ENCODE measurements at regions of chr19 and their contacts with region 1.

Region 1: DNA sequence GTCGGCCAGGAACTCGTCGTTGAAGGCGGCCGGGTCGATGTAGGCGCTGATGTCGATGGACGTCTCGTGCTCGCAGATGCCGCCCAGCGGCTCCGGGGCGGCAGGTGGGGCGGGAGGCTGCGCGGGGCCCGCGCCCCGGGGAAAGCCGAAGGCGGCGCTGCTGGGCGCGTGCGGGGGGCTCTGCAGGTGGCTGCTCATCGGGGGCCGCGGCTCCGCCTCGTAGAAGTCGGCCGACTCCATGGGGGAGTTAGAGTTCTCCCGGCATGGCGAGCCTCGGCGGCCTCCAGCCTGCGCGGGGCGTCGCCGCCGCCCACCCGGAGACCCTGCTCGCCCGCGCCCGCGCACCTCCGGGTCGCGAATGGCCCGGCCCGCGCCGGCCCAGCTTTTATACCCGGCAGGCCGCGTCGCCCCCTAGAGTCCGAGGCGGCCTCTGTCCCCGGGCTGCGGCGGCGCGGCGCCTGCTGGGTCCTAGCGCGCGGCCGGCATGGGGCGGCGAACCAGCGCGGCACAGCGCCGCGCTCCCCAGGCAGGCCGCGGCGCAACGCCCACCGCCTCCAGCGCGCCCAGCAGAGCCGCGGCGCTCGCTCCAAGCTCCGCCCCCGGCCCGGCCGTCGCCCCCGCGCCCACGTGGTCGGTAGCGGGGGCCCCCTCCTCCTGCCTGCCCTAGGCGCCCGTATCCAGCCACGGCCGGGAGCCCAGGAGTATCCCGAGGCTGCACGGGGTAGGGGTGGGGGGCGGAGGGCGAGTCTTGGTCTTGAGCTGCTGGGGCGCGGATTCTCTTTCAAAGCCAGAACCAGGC is at the start of gene CEBPA:
- DNase-seq: peak; percentile 86
- H3K4me3 Mint-ChIP-seq: peak within 1 kb of the TSS; percentile 75
- H3K27ac Mint-ChIP-seq: no peak within 1 kb of the TSS
- H3K4me1 Mint-ChIP-seq: no peaks in the 10 kb centered on the region
- H3K27me3 Mint-ChIP-seq: no peaks in the 10 kb centered on the region
- CTCF ChIP-seq: peak; percentile 39
- total RNA-seq, gene CEBPA: 4.7 and 6.2 TPM in 2 replicates

Region 2: DNA sequence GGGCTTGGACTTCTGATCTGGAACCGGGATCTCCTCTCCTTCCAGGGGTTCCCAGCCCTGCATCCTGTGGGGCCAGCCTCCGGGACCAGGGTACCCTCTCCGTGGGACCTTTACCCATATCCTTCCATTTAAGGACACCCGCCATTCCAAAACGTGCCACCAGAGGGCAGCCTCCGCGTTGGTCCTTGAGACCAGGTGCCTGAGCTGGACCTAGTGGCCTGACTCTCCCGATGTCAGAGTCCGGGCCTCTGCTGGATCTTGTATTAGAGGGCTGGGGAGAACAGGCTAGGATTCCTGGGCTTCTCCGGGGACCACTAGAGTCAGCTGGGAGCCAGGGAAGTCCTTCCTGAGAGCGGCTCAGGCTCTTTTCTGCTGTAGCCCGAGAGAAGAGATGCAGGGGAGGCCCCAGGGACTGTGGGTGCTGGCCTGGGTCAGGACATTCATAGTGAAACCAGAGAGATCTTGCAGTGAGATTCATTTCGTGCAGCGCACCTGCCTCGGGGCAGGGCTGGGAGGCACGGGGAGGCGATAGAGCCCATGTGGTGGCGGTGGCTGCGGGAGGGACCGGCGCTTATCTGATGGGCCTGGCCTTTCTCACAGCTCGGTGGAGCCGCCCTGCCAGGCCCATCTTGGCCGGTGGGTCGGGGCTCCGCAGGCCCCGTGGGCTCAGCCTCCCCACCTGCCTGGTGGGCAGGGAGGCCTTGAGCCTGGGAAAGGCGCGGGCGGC is 66.9 kb before region 1 on chr19:
- CTCF ChIA-PET with region 1: interaction called, 12 read pairs
- POLR2A ChIA-PET with region 1: no interaction called
- intact Hi-C with region 1: loop called (anchors 5 kb)
- DNase-seq: peak; percentile 80
- H3K4me3 Mint-ChIP-seq: no peak overlapping the region
- H3K27ac Mint-ChIP-seq: no peak overlapping the region
- H3K4me1 Mint-ChIP-seq: no peaks in the 10 kb centered on the region
- H3K27me3 Mint-ChIP-seq: no peaks in the 10 kb centered on the region
- CTCF ChIP-seq: peak; percentile 86

Region 3: DNA sequence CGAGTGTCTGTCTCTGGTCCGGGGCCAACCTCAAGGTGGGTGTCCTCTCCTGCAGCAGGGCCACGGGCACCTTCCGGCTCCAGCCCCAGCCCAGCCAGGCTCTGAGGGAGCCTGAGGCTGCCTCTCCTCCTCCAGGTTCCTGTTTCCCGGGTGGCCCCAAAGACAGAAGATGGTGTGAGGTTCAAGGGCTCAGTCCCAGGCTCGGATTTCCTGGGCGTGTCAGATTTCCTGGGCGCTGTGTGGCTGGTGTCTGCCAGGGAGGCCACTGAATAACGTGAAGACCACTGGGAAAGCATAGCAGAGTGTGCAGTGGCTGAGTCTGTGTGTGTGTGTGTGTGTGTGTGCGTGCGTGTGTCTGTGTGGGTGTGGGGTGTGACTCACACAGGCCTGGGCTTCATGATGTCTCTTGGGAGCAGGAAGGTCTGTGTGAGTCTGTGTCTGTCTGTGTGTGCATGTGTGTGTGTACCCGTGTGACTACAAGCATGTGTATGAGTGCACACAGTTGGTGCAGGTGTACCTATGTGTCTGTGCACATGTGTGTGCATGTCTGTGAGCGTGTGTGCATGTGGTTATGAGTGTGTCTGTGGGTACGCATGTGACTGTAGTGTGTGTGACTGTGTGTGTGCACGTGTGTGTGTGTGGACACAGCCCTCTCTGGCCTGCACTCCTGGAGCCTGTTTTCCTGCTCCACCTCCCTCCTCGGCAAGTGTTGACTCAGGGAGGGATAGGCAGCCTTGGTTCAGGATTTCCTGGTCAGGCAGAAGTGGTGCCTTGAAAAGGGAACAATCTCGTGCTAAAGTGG is 28.3 kb before region 1 on chr19:
- CTCF ChIA-PET with region 1: no interaction called
- POLR2A ChIA-PET with region 1: no interaction called
- intact Hi-C with region 1: no loop called
- DNase-seq: peak; percentile 72
- H3K4me3 Mint-ChIP-seq: no peak overlapping the region
- H3K27ac Mint-ChIP-seq: no peak overlapping the region
- H3K4me1 Mint-ChIP-seq: peaks cover 8% of the 10 kb centered on the region
- H3K27me3 Mint-ChIP-seq: no peaks in the 10 kb centered on the region
- CTCF ChIP-seq: no peak

Region 4: GRCh38 chr19:33350538-33351309 is 48.4 kb after region 1 on chr19:
- CTCF ChIA-PET with region 1: interaction called, 9 read pairs
- POLR2A ChIA-PET with region 1: interaction called, 33 read pairs
- intact Hi-C with region 1: no loop called
- DNase-seq: peak; percentile 99
- H3K4me3 Mint-ChIP-seq: peak overlapping the region; percentile 38
- H3K27ac Mint-ChIP-seq: peak overlapping the region; percentile 84
- H3K4me1 Mint-ChIP-seq: peaks cover 18% of the 10 kb centered on the region
- H3K27me3 Mint-ChIP-seq: no peaks in the 10 kb centered on the region
- CTCF ChIP-seq: no peak

Region 5: GRCh38 chr19:33358408-33358807 is 56.0 kb after region 1 on chr19:
- CTCF ChIA-PET with region 1: interaction called, 6 read pairs
- POLR2A ChIA-PET with region 1: interaction called, 13 read pairs
- intact Hi-C with region 1: no loop called
- DNase-seq: peak; percentile 41
- H3K4me3 Mint-ChIP-seq: no peak overlapping the region
- H3K27ac Mint-ChIP-seq: peak overlapping the region; percentile 63
- H3K4me1 Mint-ChIP-seq: peaks cover 13% of the 10 kb centered on the region
- H3K27me3 Mint-ChIP-seq: no peaks in the 10 kb centered on the region
- CTCF ChIP-seq: no peak

Region 6: DNA sequence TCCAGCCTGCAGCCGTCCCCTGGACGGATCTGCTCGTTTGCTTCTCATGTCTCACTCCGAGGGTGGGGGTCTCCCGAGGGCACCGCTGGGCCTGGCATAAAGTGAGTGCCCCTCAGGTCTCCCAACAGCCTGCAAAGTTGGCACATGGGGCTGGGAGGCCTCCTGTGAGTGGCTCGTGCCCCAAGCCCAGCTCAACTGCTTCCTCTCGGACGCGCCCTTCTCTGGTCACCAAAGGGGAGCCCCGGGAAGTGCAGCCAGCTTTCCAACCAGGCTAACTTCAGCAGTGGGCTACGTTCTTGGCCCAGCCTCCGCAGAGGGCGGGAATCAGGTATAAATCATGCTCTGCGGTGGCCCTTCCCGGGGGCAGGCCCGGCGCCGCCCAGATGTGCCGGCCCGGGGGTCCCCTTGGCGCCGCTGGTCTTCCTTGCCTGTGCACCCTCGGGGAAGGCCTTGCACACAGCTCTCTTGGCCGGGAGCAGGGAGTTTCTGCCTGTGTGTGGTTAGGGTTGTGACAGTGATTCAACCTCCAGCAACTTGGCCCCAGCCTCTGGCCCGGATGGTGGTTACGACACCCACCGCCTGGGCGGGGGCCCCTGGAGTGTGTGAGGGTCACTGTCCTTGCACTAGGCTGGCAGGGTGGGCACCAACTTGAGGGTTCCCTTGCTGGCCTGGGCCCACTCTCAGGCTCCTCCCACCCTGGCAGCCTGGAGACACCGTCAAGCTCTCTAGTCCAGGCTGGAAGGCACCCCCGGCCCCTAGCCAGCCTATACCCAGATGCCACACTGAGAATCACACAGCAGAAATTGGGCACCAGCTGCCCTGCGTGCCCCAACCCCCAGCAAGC is 91.9 kb after region 1 on chr19:
- CTCF ChIA-PET with region 1: interaction called, 7 read pairs
- POLR2A ChIA-PET with region 1: interaction called, 3 read pairs
- intact Hi-C with region 1: loop called (anchors 5 kb)
- DNase-seq: peak; percentile 89
- H3K4me3 Mint-ChIP-seq: no peak overlapping the region
- H3K27ac Mint-ChIP-seq: peak overlapping the region; percentile 51
- H3K4me1 Mint-ChIP-seq: peaks cover 17% of the 10 kb centered on the region
- H3K27me3 Mint-ChIP-seq: no peaks in the 10 kb centered on the region
- CTCF ChIP-seq: no peak

Region 7: DNA sequence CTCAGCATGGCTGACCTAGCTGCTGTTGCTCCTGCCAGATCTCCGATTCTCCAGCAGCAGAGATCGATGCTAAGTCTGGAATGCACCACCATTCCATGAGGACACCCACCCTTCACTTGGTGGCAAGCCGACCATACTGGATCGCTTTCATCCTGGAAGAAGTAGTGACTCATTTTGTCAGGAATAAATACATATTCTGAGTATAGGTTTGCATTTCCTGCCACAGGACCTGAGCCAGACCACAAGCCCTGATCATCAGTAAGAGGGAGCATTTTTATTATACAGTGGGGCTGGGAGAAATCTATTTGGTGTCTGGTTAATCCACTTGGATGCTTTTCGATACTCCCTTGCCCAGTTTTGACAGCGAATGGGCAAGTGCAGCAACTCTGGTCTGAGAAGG is 483.4 kb after region 1 on chr19:
- CTCF ChIA-PET with region 1: no interaction called
- POLR2A ChIA-PET with region 1: no interaction called
- intact Hi-C with region 1: no loop called
- DNase-seq: peak; percentile 38
- H3K4me3 Mint-ChIP-seq: no peak overlapping the region
- H3K27ac Mint-ChIP-seq: no peak overlapping the region
- H3K4me1 Mint-ChIP-seq: no peaks in the 10 kb centered on the region
- H3K27me3 Mint-ChIP-seq: peaks cover 11% of the 10 kb centered on the region
- CTCF ChIP-seq: no peak

Measured in MCF 10A (cell line).